IMR-90 (cell line): ENCODE measurements at regions of chr20 and their contacts with region 1.

Region 1: GRCh38 chr20:7859356-7859802 is 80.9 kb downstream of the HAO1 start:
- DNase-seq: peak; percentile 70
- ATAC-seq: peak; percentile 94
- H3K4me3 ChIP-seq: no peak overlapping the region
- H3K27ac ChIP-seq: no peak overlapping the region
- H3K4me1 ChIP-seq: no peaks in the 10 kb centered on the region; the same call in 1 of the 2 replicates
- H3K27me3 ChIP-seq: peaks cover 3% of the 10 kb centered on the region; the same call in 1 of the 2 replicates
- CTCF ChIP-seq: peak; percentile 90
- POLR2A ChIP-seq: 0 out of 2 replicates have a peak, but pooled peaks have one; percentile 28
- RAD21 ChIP-seq: peak; percentile 86

Region 2: DNA sequence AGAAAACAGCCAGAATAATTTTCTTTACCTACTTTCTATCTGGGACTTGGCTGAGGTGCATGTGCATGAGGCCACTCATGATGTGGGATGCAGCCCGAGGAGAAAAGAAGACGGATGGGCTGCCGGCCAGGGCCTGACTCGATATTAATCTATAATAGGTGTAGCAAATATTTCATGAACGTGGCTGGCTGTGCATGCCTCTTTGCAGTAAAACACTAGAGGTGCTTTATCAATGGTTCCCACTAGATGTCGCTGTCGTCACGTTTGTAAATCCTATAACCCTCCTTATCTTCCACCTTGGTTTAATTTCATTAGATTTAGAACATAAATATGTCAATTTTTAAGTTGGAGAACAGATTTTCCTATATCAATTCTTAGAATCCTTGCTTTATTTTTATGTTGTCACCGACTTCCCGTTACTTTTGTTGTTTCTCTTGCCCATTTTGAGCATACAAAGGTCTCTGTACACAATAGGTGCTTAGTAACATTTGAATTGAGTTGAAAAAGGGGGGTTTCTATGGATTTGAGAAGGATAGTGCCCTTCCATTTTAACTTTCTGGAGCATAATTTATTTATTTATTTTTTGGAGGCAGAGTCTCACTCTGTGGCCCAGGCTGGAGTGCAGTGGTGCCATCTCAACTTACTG is 1716.9 kb before region 1 on chr20:
- CTCF ChIA-PET with region 1: no interaction called
- POLR2A ChIA-PET with region 1: no interaction called
- dilution Hi-C with region 1: no loop called
- in situ Hi-C with region 1: no loop called
- intact Hi-C with region 1: loop called (anchors 5 kb)
- DNase-seq: peak; percentile 65
- ATAC-seq: peak; percentile 91
- H3K4me3 ChIP-seq: no peak overlapping the region
- H3K27ac ChIP-seq: no peak overlapping the region
- H3K4me1 ChIP-seq: no peaks in the 10 kb centered on the region
- H3K27me3 ChIP-seq: peaks cover 2% of the 10 kb centered on the region; the same call in 1 of the 2 replicates
- CTCF ChIP-seq: peak; percentile 84
- POLR2A ChIP-seq: no peak
- RAD21 ChIP-seq: peak; percentile 83

Region 3: DNA sequence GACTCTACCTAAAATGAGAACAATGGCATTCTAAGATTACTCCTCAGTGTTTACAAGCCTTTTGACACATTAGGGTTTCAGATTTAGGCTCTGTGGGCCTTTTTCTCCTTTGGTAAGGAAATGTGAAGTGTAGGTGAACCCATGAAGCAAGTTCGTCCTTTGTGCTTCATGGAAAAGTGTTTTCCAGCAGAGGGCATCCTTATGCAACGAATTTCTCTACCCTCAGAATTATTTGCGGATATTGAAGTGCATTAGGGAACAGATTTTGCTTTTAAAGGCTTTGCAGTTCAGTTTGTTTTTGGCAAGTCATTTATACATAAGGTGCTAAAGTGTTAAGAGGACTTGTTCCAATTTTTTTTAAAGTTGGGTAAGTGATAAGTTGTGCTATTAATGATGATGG is 1680.8 kb before region 1 on chr20:
- CTCF ChIA-PET with region 1: no interaction called
- POLR2A ChIA-PET with region 1: no interaction called
- dilution Hi-C with region 1: no loop called
- in situ Hi-C with region 1: no loop called
- intact Hi-C with region 1: loop called (anchors 2 kb)
- DNase-seq: peak; percentile 51
- ATAC-seq: peak; percentile 56
- H3K4me3 ChIP-seq: no peak overlapping the region
- H3K27ac ChIP-seq: no peak overlapping the region
- H3K4me1 ChIP-seq: no peaks in the 10 kb centered on the region
- H3K27me3 ChIP-seq: no peaks in the 10 kb centered on the region; the same call in 1 of the 2 replicates
- CTCF ChIP-seq: peak; percentile 61
- POLR2A ChIP-seq: no peak
- RAD21 ChIP-seq: peak; percentile 62

Region 4: GRCh38 chr20:6636209-6637159 is 1222.9 kb before region 1 on chr20:
- CTCF ChIA-PET with region 1: no interaction called
- POLR2A ChIA-PET with region 1: no interaction called
- dilution Hi-C with region 1: no loop called
- in situ Hi-C with region 1: no loop called
- intact Hi-C with region 1: loop called (anchors 5 kb)
- DNase-seq: peak; percentile 69
- ATAC-seq: peak; percentile 87
- H3K4me3 ChIP-seq: no peak overlapping the region
- H3K27ac ChIP-seq: no peak overlapping the region
- H3K4me1 ChIP-seq: no peaks in the 10 kb centered on the region
- H3K27me3 ChIP-seq: peaks cover 8% of the 10 kb centered on the region
- CTCF ChIP-seq: peak; percentile 66
- POLR2A ChIP-seq: no peak
- RAD21 ChIP-seq: peak; percentile 64

Region 5: GRCh38 chr20:6828794-6829423 is 1030.5 kb before region 1 on chr20:
- CTCF ChIA-PET with region 1: interaction called, 4 read pairs
- POLR2A ChIA-PET with region 1: no interaction called
- dilution Hi-C with region 1: no loop called
- in situ Hi-C with region 1: loop called (anchors 10 kb)
- intact Hi-C with region 1: loop called (anchors 1 kb)
- DNase-seq: peak; percentile 43
- ATAC-seq: peak; percentile 85
- H3K4me3 ChIP-seq: no peak overlapping the region
- H3K27ac ChIP-seq: no peak overlapping the region
- H3K4me1 ChIP-seq: no peaks in the 10 kb centered on the region
- H3K27me3 ChIP-seq: no peaks in the 10 kb centered on the region
- CTCF ChIP-seq: peak; percentile 63
- POLR2A ChIP-seq: no peak
- RAD21 ChIP-seq: peak; percentile 46

Region 6: GRCh38 chr20:7285918-7286556 is 573.3 kb before region 1 on chr20:
- CTCF ChIA-PET with region 1: no interaction called
- POLR2A ChIA-PET with region 1: no interaction called
- dilution Hi-C with region 1: no loop called
- in situ Hi-C with region 1: no loop called
- intact Hi-C with region 1: loop called (anchors 2 kb)
- DNase-seq: peak; percentile 75
- ATAC-seq: peak; percentile 80
- H3K4me3 ChIP-seq: no peak overlapping the region
- H3K27ac ChIP-seq: no peak overlapping the region
- H3K4me1 ChIP-seq: no peaks in the 10 kb centered on the region
- H3K27me3 ChIP-seq: no peaks in the 10 kb centered on the region
- CTCF ChIP-seq: peak; percentile 78
- POLR2A ChIP-seq: no peak
- RAD21 ChIP-seq: peak; percentile 66

Region 7: GRCh38 chr20:7459083-7459482 is 400.3 kb before region 1 on chr20:
- CTCF ChIA-PET with region 1: no interaction called
- POLR2A ChIA-PET with region 1: no interaction called
- dilution Hi-C with region 1: no loop called
- in situ Hi-C with region 1: no loop called
- intact Hi-C with region 1: no loop called
- DNase-seq: no peak
- ATAC-seq: no peak
- H3K4me3 ChIP-seq: no peak overlapping the region
- H3K27ac ChIP-seq: no peak overlapping the region
- H3K4me1 ChIP-seq: no peaks in the 10 kb centered on the region
- H3K27me3 ChIP-seq: no peaks in the 10 kb centered on the region
- CTCF ChIP-seq: no peak
- POLR2A ChIP-seq: no peak
- RAD21 ChIP-seq: no peak